Dendritic cell treated with granulocyte-macrophage colony-stimulating factor and Interleukin-4, amounts not matched to agents 40 ng/mL and 50 ng/mL, for 4 days (primary cell): ENCODE measurements at regions of chrX and their contacts with region 1.

Region 1: DNA sequence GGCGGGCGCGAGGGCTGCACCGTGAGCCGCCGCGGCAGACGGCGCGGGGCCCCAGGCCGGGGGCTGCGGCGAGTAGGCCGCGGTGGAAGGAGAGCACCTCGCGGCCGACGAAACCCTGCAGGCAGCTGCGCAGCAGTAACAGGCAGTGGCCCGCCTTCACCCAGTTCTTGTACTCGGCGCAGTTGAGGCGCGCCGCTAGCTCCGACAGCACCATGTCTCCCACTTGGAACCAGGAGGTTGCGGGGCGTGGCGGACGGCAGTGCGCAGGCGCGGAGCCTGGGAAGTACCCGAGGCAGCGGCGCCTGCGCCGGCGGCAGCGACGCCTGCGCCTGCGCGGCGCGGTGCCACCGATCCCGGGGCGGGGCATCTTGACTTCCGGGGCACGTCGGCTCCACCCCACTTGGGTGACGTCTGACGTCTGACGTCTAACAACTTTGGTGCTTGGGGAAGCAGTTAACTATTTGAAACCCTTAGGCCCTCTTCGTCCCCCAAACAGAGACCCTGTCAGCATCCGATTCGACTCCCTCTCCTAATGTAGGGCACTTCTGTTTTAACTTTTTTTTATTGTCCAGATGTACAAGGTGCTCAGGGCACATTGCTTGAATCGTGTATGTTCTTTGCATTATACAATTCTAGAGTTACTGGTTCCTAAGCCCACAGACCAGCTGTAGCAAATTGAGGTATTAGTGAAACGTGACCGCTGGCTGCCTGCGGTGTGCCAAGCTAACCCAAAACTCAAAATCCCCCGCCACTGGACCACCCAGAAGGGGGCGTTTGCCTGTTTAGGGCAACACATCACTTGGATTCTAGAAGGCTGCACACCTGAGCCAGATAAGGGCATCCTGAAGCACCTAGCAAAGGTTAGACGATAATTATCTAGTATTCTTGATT is at the start of gene CXorf38:
- H3K4me3 Mint-ChIP-seq: peak within 1 kb of the TSS; percentile 93
- H3K27ac Mint-ChIP-seq: peak within 1 kb of the TSS; percentile 95
- H3K4me1 Mint-ChIP-seq: peaks cover 18% of the 10 kb centered on the region
- H3K27me3 Mint-ChIP-seq: no peaks in the 10 kb centered on the region

Region 2: DNA sequence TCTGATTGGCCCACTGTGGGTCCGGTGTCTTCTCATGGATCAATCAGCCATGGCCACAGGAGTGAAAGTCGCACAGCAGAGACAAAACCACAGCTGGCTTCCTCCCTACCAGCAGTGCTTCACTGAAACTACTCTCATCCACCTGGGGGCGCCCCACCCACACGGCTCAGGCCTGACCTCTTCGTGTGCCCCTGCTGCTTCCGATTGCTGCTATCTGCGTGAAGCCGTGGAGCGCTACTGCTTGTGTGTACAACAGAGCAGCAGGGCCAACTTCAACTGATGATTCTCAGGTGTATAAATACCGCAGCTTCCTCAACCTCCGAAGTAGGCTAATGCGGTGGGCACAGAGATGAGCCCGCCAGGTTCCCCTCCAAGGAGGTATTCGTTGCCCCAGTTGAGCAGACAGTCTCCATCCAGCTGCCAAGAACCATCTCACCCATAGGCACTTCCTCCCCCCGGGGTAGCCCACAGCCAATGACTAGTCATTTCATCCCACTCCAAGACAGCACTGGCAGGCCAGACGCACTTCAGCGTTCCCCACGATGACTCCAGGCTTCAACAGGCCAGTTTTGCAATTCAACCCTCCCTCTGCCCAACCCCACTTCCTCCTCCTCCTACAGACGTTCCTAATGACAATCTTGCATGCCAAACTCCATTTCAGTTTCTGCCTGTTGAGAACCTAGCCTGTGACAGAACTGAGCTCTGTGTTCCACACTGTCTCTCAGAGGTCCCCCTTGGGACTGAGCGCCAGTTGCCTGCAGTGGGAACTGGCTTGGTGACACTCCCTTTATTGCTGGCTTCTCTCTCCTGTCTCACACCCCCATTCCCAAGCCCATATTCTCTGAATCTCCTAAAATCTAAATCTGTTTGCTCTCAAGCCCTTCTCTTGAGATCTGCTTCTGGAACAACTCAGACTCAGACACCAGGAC is 108.1 kb before region 1 on chrX:
- intact Hi-C with region 1: loop called (anchors 5 kb)
- H3K4me3 Mint-ChIP-seq: peak overlapping the region; percentile 42
- H3K27ac Mint-ChIP-seq: peak overlapping the region; percentile 88
- H3K4me1 Mint-ChIP-seq: peaks cover 45% of the 10 kb centered on the region
- H3K27me3 Mint-ChIP-seq: peaks cover 2% of the 10 kb centered on the region

Region 3: DNA sequence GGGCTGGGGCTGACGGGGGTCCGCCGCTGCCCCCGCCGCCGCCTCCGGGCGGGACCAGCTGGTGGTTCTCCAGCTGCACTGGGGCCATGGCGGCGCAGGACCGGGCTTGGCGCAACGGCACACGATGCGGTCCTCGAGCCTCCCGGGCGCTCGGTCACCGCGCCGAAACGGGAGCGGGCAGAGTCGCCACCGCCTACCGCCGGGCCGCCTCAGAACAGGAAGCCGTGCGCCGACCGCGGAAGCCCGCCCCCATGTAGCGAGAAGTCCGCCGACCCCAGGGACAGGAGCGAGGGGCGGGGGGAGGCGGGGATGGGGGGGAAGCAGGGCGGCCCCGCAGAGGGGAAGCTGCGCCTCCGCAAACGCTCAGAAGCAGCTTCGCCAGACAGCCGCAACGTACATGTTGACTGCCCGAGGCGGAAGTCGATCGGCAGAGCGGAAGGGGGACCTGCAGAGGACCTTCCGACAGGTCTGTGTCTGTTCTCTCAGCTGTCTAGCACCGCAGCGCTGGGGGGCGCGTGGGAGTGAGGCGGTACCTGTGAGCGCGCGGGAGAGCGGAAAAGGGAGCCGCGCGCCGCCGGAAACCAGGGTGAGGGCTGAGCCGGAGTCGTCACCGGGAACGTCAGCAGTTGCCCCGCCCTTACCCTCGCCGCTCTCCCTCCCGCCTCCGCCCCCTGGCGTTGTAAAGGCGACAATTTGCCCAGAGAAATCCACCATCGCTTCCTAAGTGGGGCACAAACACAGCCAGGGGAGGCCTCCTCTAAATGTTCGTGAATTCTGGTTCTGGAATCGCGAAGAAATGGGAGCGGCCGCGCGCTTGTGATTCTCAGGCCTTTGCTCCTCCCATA is 88.0 kb after region 1 on chrX and contains the start of gene MED14:
- intact Hi-C with region 1: loop called (anchors 10 kb)
- H3K4me3 Mint-ChIP-seq: peak within 1 kb of the TSS; percentile 98
- H3K27ac Mint-ChIP-seq: peak within 1 kb of the TSS; percentile 100
- H3K4me1 Mint-ChIP-seq: peaks cover 26% of the 10 kb centered on the region
- H3K27me3 Mint-ChIP-seq: no peaks in the 10 kb centered on the region

Region 4: DNA sequence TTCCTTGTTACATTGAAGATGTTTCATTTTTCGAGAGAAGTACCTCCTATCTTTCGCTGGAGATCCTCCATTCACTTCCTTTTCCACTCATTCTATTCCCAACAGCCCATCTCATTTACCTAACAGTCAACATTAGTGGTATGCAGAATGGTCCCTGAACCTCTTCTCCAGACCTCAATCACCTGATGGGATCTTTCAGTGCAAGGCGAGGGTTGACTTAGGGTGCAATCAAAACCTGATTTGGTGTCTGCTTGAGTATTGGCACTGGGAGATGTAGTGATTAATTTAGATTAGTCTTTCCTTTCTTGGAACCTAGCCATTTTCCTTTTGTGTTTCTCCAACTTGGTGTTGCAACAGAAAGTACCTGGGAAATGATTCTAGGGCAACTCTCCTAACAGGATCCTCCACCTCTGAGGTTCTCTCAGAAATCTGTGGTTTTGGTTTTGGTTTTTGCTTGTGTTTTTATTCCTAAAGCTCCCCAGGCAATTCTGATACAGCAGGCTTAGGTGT is 704.8 kb after region 1 on chrX:
- intact Hi-C with region 1: no loop called
- H3K4me3 Mint-ChIP-seq: no peak overlapping the region
- H3K27ac Mint-ChIP-seq: no peak overlapping the region
- H3K4me1 Mint-ChIP-seq: peaks cover 5% of the 10 kb centered on the region
- H3K27me3 Mint-ChIP-seq: no peaks in the 10 kb centered on the region